PC-9 (cell line): ENCODE measurements at regions of chr9 and their contacts with region 1.

Region 1: DNA sequence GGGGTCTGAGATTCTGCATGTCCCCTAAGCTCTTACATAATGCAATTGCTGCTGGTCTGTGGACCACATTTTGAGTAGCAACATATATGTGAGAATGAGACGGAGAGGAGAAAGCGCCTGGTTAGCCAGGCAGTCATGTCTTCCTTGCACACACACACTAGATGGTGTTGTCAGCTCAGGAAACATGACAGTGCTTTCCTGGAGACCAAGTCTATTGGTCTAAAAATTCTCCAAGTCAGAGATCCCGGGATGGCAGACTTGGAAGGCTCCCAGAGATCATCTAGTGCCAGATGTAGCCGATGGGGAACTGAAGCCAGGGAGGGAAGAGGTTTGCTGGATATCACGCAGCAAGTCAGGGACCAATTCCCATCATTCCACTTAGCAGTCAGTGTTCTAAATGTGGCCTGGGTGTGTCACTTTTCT is 53.4 kb downstream of the GALNT12 start:
- DNase-seq: peak in 1 of 2 experiments; percentile 32
- H3K4me3 ChIP-seq: no peak overlapping the region
- H3K27ac ChIP-seq: no peak overlapping the region
- H3K4me1 ChIP-seq: peaks cover 7% of the 10 kb centered on the region; the same call in 1 of the 2 replicates
- H3K27me3 ChIP-seq: no peaks in the 10 kb centered on the region
- CTCF ChIP-seq: no peak

Region 2: DNA sequence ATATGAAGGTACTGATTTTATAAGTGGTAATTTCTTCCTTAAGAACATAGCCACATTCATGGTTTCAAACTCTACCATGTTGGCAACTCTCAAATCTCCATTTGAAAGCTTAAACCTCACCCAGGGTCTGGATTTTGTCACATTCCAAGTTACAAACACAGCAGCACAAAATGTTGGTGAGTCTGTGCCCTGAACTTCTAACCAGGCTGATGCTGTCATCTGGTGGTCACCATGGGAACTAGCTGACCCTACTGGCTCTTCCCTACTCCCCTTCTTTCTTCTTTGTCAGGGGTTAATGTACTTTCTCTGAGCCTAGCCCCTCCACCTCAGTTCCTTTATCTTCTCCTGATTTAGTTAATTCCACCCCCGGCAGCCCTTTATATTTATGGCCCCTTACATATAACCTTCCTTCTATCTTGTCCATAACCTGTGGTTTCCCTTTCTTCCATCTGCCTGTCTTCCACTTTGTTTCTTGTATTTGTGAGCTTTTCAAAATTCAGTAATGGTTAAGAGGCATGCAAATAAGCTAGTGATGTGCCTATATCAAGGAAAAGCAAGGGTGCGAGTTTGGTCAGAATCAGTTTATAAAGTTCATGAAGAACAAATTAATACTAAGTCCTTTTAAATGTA is 279.9 kb after region 1 on chr9:
- CTCF ChIA-PET with region 1: no interaction called
- POLR2A ChIA-PET with region 1: no interaction called
- intact Hi-C with region 1: loop called (anchors 2 kb)
- DNase-seq: peak in 1 of 2 experiments; percentile 34
- H3K4me3 ChIP-seq: no peak overlapping the region
- H3K27ac ChIP-seq: no peak overlapping the region
- H3K4me1 ChIP-seq: no peaks in the 10 kb centered on the region
- H3K27me3 ChIP-seq: no peaks in the 10 kb centered on the region
- CTCF ChIP-seq: peak; percentile 74